BJ (cell line): ENCODE measurements at regions of chr3 and their contacts with region 1.

Region 1: GRCh38 chr3:81728766-81729544 is 32.5 kb downstream of the GBE1 start:
- DNase-seq: no peak
- H3K4me3 ChIP-seq: no peak overlapping the region
- H3K27me3 ChIP-seq: no peaks in the 10 kb centered on the region
- CTCF ChIP-seq: no peak

Region 2: DNA sequence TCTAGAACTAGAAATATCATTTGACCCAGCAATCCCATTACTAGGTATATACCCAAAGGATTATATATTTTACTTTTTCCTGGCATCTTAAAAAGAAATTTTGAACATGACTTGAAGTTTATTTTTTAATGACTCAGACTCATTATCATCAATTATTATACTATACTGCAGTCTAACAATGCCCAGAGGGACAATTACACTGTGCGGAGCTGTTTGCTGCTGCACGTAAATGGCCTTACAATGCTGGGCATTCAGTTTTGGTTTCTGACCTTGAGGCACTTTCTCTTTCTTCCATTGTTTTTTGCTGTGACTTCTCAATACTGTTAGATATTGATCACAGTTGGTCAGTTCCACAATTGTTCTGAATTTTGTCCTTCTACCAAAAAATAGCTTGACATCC is 96.3 kb before region 1 on chr3:
- CTCF ChIA-PET with region 1: no interaction called
- POLR2A ChIA-PET with region 1: interaction called, 14 read pairs
- DNase-seq: no peak
- H3K4me3 ChIP-seq: no peak overlapping the region
- H3K27me3 ChIP-seq: no peaks in the 10 kb centered on the region
- CTCF ChIP-seq: no peak

Region 3: GRCh38 chr3:81716870-81717509 is 12.0 kb before region 1 on chr3:
- CTCF ChIA-PET with region 1: interaction called, 3 read pairs
- POLR2A ChIA-PET with region 1: interaction called, 26 read pairs
- DNase-seq: no peak
- H3K4me3 ChIP-seq: no peak overlapping the region
- H3K27me3 ChIP-seq: no peaks in the 10 kb centered on the region
- CTCF ChIP-seq: no peak